ENCODE measurements at regions of chr7 and their contacts with region 1.

Region 1: GRCh38 chr7:44044315-44045225 is at the start of gene DBNL:
- DNase-seq: peak; percentile 94
- H3K4me3 Mint-ChIP-seq: peak within 1 kb of the TSS; percentile 83
- H3K27ac Mint-ChIP-seq: peak within 1 kb of the TSS; percentile 98
- H3K4me1 Mint-ChIP-seq: peaks cover 53% of the 10 kb centered on the region
- H3K27me3 Mint-ChIP-seq: no peaks in the 10 kb centered on the region
- total RNA-seq, gene DBNL: 175 to 176 TPM

Region 2: DNA sequence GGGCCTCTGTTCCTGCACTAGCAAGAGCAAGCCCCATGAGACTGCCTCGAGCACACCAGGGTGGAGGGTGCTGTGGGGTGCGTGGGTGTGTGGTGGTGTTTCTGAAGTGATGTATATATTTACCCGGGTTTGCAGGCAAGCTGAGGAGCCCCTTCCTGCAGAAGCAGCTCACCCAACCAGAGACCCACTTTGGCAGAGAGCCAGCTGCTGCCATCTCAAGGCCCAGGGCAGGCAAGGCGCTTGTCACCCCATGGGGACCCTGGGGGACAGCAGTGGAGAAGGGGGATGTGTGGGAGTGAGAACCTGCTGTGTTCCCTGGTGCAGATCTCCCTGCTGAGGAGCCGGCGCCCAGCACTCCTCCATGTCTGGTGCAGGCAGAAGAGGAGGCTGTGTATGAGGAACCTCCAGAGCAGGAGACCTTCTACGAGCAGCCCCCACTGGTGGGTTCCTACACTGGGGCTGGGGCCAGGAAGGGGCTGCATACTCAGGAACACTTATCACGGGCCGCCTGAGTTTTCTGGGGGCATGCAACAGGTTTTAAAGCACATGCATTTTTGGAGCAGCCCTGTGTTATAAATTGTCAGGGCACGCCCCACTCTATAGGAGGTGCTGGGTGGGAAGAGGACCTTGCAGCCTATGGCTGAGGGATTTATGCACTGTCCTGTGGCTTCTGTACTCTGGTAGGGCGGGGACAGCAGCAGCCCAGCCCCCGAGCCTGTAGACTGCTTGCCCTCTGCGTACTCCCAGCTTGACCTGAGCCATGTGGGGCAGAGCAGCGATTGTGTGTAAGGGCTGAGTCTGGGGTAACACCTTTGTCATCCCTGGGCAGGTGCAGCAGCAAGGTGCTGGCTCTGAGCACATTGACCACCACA is 14.9 kb after region 1 on chr7:
- CTCF ChIA-PET with region 1: no interaction called
- POLR2A ChIA-PET with region 1: interaction called, 73 read pairs
- DNase-seq: no peak
- H3K4me3 Mint-ChIP-seq: no peak overlapping the region
- H3K27ac Mint-ChIP-seq: no peak overlapping the region
- H3K4me1 Mint-ChIP-seq: peaks cover 10% of the 10 kb centered on the region
- H3K27me3 Mint-ChIP-seq: no peaks in the 10 kb centered on the region

Region 3: GRCh38 chr7:44065436-44066118 is 21.0 kb after region 1 on chr7 and contains the start of gene PGAM2:
- CTCF ChIA-PET with region 1: interaction called, 3 read pairs
- POLR2A ChIA-PET with region 1: interaction called, 73 read pairs
- DNase-seq: no peak
- H3K4me3 Mint-ChIP-seq: no peak within 1 kb of the TSS
- H3K27ac Mint-ChIP-seq: no peak within 1 kb of the TSS
- H3K4me1 Mint-ChIP-seq: peaks cover 6% of the 10 kb centered on the region
- H3K27me3 Mint-ChIP-seq: no peaks in the 10 kb centered on the region
- total RNA-seq, gene PGAM2: 0.43 TPM in 1 of 2 experiments, not detected in the other

Region 4: GRCh38 chr7:44177570-44178131 is 133.1 kb after region 1 on chr7:
- CTCF ChIA-PET with region 1: no interaction called
- POLR2A ChIA-PET with region 1: no interaction called
- DNase-seq: no peak
- H3K4me3 Mint-ChIP-seq: no peak overlapping the region
- H3K27ac Mint-ChIP-seq: no peak overlapping the region
- H3K4me1 Mint-ChIP-seq: no peaks in the 10 kb centered on the region
- H3K27me3 Mint-ChIP-seq: peaks cover 22% of the 10 kb centered on the region